Activated CD4-positive, alpha-beta memory T cell treated with anti-CD3 and anti-CD28 coated beads, Interleukin-2, amount 10 ng/mL, durations not matched to agents 7 days and 5 days (primary cell): ENCODE measurements at regions of chr7 and their contacts with region 1.

Region 1: GRCh38 chr7:143214789-143215679 is 6.8 kb upstream of the TAS2R40 start:
- DNase-seq: peak; percentile 70
- H3K4me3 Mint-ChIP-seq: no peak overlapping the region
- H3K27ac Mint-ChIP-seq: no peak overlapping the region
- H3K4me1 Mint-ChIP-seq: no peaks in the 10 kb centered on the region
- H3K27me3 Mint-ChIP-seq: peaks cover 9% of the 10 kb centered on the region

Region 2: DNA sequence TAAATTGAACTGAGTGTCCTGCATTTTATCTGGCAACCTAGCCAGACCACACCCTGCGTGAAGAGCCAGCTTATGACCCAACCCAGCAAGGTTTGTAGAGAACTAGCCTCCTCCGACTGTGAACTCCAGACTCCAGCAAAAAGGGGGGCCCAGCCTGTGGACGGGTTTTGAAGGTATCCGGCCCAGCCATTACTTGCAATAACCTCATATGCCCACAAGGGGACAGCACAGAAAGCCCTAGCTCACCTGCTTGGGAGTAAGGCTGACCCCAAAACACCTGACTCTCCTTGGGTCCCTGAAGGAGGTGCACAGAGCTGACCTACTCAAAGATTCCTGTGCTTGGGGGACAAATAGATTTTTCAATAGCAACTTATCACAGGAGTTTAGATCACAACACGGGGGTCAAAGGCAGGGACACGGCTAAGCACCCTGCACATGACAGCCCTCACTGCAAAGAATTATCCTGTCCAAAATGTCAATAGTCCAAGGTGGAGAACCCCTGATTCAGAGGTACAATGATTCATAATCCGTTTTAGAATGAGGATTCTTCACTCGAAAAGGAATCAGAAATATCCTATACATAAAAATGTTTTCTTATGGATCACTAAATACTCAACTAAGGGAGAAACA is 334.0 kb before region 1 on chr7:
- CTCF ChIA-PET with region 1: interaction called, 11 read pairs
- POLR2A ChIA-PET with region 1: no interaction called
- DNase-seq: peak; percentile 50
- H3K4me3 Mint-ChIP-seq: no peak overlapping the region
- H3K27ac Mint-ChIP-seq: no peak overlapping the region
- H3K4me1 Mint-ChIP-seq: no peaks in the 10 kb centered on the region
- H3K27me3 Mint-ChIP-seq: peaks cover 18% of the 10 kb centered on the region

Region 3: DNA sequence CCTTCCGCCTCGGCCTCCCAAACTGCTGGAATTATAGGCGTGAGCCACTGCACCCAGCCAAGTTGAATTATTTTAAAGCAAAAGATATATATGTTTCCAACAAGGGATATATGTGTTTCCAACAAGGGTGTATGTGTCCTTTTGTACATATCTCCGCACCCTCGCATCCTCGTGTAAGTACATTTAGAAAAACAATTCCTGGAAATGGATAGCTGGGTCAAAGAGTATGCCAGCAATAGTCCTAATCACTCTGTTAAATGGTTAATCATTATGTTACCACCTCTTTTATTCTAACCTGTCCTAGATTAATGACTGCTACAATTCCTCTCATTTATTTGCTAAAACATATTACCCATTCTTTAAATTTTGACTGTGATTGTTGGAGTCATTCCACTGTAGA is 216.1 kb before region 1 on chr7:
- CTCF ChIA-PET with region 1: interaction called, 235 read pairs
- POLR2A ChIA-PET with region 1: interaction called, 3 read pairs
- DNase-seq: no peak
- H3K4me3 Mint-ChIP-seq: no peak overlapping the region
- H3K27ac Mint-ChIP-seq: no peak overlapping the region
- H3K4me1 Mint-ChIP-seq: peaks cover 6% of the 10 kb centered on the region
- H3K27me3 Mint-ChIP-seq: peaks cover 9% of the 10 kb centered on the region

Region 4: GRCh38 chr7:143015078-143015477 is 200.0 kb before region 1 on chr7:
- CTCF ChIA-PET with region 1: interaction called, 235 read pairs
- POLR2A ChIA-PET with region 1: no interaction called
- DNase-seq: no peak
- H3K4me3 Mint-ChIP-seq: no peak overlapping the region
- H3K27ac Mint-ChIP-seq: no peak overlapping the region
- H3K4me1 Mint-ChIP-seq: no peaks in the 10 kb centered on the region
- H3K27me3 Mint-ChIP-seq: peaks cover 25% of the 10 kb centered on the region

Region 5: DNA sequence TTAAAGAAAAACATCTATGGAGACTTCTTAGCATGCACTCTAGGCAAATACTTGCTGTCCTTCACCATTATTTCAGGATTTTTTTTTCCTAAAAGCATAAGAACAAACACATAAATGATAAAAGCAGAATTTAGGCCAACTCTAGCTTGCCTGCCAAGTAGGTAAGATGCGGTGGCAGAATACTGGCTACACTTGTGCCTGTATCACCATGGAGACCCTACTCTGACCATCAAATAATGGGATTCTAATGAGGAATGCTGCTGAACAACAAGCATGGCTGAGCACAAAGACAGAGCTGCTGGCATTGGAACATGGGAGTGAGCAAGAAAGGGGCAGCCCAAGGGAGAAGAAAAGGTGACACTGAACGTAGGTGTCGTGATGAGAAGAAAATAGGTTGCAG is 11.6 kb before region 1 on chr7:
- CTCF ChIA-PET with region 1: interaction called, 14 read pairs
- POLR2A ChIA-PET with region 1: interaction called, 3 read pairs
- DNase-seq: no peak
- H3K4me3 Mint-ChIP-seq: no peak overlapping the region
- H3K27ac Mint-ChIP-seq: no peak overlapping the region
- H3K4me1 Mint-ChIP-seq: peaks cover 12% of the 10 kb centered on the region
- H3K27me3 Mint-ChIP-seq: peaks cover 22% of the 10 kb centered on the region

Region 6: DNA sequence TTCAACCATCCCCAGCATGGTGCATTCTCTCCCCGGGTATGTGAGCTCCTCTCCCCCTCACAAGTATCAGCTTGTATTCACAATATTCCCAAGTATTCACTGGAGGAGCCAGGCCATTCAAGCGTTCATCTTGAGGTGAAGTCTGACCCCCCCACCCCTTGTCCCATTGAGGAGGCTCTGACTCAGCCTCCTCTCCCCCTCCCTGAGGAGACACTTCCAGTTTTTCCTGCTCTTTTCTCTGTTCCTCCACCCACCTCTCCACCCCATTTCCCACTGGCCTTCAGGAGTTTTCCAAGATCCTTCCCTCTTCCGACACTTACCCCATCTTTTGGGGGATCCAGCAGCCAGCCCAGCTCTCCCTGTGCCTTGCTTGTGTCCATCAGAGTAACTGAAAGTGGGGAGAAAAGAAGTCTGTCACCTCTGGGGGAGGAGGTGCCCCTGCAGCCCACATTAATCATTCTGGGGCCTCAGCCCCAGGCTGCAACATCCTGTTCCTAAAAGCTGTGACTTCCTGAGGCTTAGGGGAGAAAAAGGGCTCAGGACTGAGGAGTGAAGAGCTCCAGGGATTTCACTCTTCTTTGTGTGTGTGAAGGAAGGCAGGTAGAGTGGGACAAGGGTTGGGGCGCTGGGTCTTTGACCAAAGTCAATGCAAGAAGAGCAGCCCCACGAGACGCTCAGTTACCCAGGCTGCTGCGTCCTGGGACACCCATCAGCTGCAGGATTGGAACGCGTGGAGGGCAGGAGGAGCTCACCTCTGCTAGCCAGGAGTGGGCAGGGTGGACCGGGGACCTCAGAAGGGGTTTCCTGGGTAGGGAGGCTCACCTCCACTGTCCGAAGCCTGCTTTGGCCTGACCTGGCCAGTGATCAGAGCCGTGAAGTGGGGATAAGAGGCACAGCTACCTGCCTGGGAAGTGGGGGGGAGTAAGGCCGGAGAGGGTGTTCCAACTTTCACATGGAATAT is 192.5 kb after region 1 on chr7:
- CTCF ChIA-PET with region 1: no interaction called
- POLR2A ChIA-PET with region 1: no interaction called
- DNase-seq: peak; percentile 39
- H3K4me3 Mint-ChIP-seq: peak overlapping the region; percentile 45
- H3K27ac Mint-ChIP-seq: no peak overlapping the region
- H3K4me1 Mint-ChIP-seq: peaks cover 33% of the 10 kb centered on the region
- H3K27me3 Mint-ChIP-seq: peaks cover 12% of the 10 kb centered on the region